ENCODE measurements at regions of chr16 and their contacts with region 1.

Region 1: DNA sequence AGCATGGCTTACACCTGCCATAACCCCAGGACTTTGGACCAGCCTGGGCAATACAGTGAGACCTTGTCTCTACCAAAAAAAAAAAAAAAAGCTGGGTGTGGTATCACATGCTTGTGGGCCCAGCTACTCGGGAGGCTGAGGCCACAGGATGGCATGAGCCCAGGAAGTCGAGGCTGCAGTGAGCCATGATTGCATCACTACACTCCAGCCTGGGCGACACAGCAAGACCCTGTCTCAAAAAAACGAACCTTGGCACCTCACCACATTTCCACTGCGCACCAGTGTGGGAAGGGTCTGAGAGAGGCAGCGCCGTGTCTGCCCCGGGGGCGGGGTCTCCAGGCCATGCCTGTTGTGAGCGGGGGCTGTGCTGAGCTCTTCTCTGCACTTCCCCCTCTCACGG is 6.3 kb downstream of the ACSF3 start:
- DNase-seq: no peak
- H3K4me3 Mint-ChIP-seq: peak overlapping the region; percentile 56
- H3K27ac Mint-ChIP-seq: peak overlapping the region; percentile 73
- H3K4me1 Mint-ChIP-seq: peaks cover 66% of the 10 kb centered on the region
- H3K27me3 Mint-ChIP-seq: no peaks in the 10 kb centered on the region

Region 2: GRCh38 chr16:88706288-88706964 is 393.5 kb before region 1 on chr16 and contains the starts of genes CTU2 and RNF166:
- intact Hi-C with region 1: loop called (anchors 5 kb)
- DNase-seq: peak; percentile 92
- H3K4me3 Mint-ChIP-seq: peak within 1 kb of the TSS; percentile 89
- H3K27ac Mint-ChIP-seq: peak within 1 kb of the TSS; percentile 86
- H3K4me1 Mint-ChIP-seq: peaks cover 47% of the 10 kb centered on the region
- H3K27me3 Mint-ChIP-seq: no peaks in the 10 kb centered on the region
- total RNA-seq, gene CTU2: 66.3 and 74.7 TPM in 2 replicates
- total RNA-seq, gene RNF166: 42.4 and 45.0 TPM in 2 replicates

Region 3: GRCh38 chr16:88941913-88942909 is 157.7 kb before region 1 on chr16:
- intact Hi-C with region 1: loop called (anchors 5 kb)
- DNase-seq: peak; percentile 36
- H3K4me3 Mint-ChIP-seq: peak overlapping the region; percentile 26
- H3K27ac Mint-ChIP-seq: no peak overlapping the region
- H3K4me1 Mint-ChIP-seq: no peaks in the 10 kb centered on the region
- H3K27me3 Mint-ChIP-seq: peaks cover 31% of the 10 kb centered on the region

Region 4: DNA sequence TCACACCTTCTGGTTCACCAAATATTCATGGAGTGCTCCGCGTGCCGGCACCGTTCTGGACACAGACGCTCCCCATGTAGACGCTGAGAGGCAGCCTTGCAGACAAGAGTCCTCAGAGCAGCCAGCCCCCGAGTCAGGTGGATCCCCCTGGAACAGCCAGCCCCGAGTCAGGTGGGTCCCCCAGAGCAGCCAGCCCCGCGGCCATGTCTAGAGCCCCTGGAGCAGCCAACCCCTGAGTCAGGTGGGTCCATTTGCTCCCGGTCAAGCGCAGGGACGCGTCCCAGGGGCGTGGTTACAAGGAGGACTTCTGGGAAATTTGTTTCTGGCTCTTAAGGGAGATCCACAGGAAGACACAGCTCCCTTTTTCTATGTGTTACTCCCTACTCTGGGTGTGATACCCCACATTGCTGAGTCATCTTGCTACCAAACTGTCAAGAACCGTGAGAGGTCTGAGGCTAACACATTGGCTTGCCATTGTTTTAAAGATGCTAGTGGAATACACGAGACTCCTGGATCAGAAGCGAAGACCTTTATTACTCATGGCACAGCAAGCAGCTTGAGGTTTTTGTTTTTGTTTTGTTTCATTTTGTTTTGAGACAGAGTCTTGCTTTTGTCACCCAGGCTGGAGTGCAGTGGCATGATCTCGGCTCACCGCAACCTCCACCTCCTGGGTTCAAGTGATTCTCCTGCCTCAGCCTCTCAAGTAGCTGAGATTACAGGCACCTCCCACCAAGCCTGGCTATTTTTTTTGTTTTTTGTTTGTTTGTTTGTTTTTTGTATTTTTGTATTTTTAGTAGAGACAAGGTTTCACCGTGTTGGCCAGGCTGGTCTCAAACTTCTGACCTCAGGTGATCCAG is 79.6 kb before region 1 on chr16:
- intact Hi-C with region 1: loop called (anchors 1 kb)
- DNase-seq: peak; percentile 63
- H3K4me3 Mint-ChIP-seq: no peak overlapping the region
- H3K27ac Mint-ChIP-seq: peak overlapping the region; percentile 55
- H3K4me1 Mint-ChIP-seq: peaks cover 25% of the 10 kb centered on the region
- H3K27me3 Mint-ChIP-seq: no peaks in the 10 kb centered on the region

Region 5: DNA sequence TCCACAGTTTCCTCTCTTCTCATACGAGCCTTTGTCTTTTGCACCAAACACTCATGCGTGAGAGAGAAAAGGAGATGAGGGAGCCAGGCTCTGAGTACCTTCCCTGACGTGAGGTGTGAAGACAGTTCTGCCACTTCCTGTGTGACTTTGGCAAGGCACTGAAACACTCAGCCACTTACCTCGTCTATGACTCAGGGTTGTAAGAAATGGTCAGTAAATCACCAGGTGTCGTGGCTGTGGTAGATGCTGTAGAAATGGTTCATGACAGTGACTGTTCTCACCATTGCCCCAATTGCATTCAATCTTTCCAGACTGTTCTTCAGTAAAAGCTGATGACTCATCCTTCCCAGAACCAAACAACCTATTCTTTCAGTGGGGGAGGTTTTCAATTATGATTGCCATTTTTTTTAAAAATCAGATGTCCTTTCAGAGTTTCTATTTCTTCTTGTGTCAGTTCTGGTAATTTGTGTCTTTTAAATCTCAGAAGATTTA is 73.7 kb before region 1 on chr16:
- intact Hi-C with region 1: loop called (anchors 1 kb)
- DNase-seq: peak; percentile 72
- H3K4me3 Mint-ChIP-seq: peak overlapping the region; percentile 34
- H3K27ac Mint-ChIP-seq: peak overlapping the region; percentile 82
- H3K4me1 Mint-ChIP-seq: peaks cover 38% of the 10 kb centered on the region
- H3K27me3 Mint-ChIP-seq: no peaks in the 10 kb centered on the region

Region 6: DNA sequence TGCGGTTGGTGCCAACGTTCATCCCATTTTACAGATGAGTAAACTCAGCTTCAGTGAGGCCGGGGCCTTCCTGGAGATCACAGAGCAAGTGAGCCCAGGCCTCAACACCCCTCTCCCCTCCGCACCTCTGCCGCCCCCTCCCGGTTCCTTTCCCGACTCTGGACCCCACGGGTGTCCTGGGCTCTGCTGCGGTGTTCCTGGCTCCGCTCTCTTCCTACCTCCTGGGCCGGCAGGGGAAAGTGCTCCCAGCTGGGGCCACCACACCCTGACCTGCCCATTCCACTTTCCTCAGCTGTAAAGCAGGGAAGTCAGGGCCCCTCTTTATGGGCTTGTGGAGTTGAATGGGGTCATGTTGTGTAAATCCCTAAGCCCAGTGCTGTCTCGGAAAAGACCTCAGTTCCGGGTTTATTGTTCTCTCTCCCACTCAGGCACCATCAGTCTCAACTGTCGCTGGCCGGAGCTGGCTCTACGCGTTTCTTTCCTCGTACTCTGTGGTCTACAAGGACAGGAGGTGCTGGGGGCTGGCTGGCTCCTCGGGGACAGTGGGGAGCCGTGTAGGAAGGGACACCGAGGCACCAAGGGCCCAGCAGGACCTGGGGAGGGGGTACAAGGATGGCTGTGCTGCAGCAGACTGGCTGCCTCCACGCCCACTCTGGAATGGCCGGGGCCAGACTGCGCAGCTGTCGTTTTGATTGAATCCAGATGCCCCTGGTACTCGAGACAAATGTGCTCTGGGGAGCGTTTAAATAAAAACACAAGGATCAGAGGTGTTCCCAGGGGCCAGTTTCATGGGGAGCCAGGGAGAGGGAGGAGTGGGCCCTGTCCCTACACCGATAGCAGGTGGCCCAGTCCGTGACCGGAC is 28.0 kb before region 1 on chr16:
- intact Hi-C with region 1: no loop called
- DNase-seq: no peak
- H3K4me3 Mint-ChIP-seq: no peak overlapping the region
- H3K27ac Mint-ChIP-seq: no peak overlapping the region
- H3K4me1 Mint-ChIP-seq: no peaks in the 10 kb centered on the region
- H3K27me3 Mint-ChIP-seq: no peaks in the 10 kb centered on the region

Region 7: GRCh38 chr16:89115216-89115861 is 15.4 kb after region 1 on chr16:
- intact Hi-C with region 1: loop called (anchors 1 kb)
- DNase-seq: peak; percentile 83
- H3K4me3 Mint-ChIP-seq: peak overlapping the region; percentile 79
- H3K27ac Mint-ChIP-seq: peak overlapping the region; percentile 90
- H3K4me1 Mint-ChIP-seq: peaks cover 29% of the 10 kb centered on the region
- H3K27me3 Mint-ChIP-seq: no peaks in the 10 kb centered on the region

Region 8: GRCh38 chr16:89184933-89185794 is 85.3 kb after region 1 on chr16:
- intact Hi-C with region 1: no loop called
- DNase-seq: no peak
- H3K4me3 Mint-ChIP-seq: no peak overlapping the region
- H3K27ac Mint-ChIP-seq: no peak overlapping the region
- H3K4me1 Mint-ChIP-seq: no peaks in the 10 kb centered on the region
- H3K27me3 Mint-ChIP-seq: no peaks in the 10 kb centered on the region